MCF 10A (cell line): ENCODE measurements at regions of chr6 and their contacts with region 1.

Region 1: DNA sequence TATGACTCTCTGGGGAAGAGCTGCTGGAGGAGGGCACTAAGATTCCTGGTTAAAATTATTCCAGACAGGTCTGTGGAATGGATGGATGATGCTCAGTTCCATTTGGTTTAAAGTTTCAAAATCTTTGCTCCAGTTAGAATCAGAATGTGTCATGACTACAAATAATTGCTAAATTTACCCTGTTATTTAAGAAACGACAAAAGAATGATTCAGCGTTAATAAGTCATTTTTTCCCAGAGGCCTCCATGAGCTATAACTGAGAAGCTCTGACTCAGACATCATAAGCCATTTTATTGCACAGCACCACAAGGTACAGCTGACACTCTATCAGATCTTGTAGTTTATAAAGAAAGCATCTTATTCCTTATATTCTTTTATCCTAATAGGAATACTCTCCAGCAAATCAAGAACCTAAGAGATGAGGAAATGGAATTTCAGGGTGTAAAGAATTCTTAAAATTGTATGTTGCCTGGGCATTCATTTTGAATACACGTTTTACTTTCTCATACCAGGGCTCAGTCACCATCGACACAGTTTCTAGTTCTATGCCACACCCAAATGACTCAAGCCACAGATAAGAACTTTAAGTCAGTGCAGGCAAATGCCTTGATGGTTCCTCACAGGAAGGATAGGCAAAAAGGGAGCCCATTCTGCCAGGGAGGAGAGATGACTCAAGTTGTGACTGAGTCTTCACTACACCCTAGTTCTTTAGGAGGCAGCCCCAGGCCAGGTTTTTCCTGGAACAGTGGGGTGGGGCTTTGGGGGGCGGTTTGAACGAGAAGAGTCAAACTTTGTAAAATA is 636.0 kb downstream of the MMUT start:
- DNase-seq: peak; percentile 98
- H3K4me3 Mint-ChIP-seq: peak overlapping the region; percentile 69
- H3K27ac Mint-ChIP-seq: peak overlapping the region; percentile 100
- H3K4me1 Mint-ChIP-seq: peaks cover 29% of the 10 kb centered on the region
- H3K27me3 Mint-ChIP-seq: no peaks in the 10 kb centered on the region
- CTCF ChIP-seq: no peak

Region 2: GRCh38 chr6:48111143-48111506 is 716.0 kb before region 1 on chr6 and contains the start of gene PTCHD4:
- CTCF ChIA-PET with region 1: no interaction called
- POLR2A ChIA-PET with region 1: interaction called, 4 read pairs
- intact Hi-C with region 1: loop called (anchors 10 kb)
- DNase-seq: peak; percentile 98
- H3K4me3 Mint-ChIP-seq: peak within 1 kb of the TSS; percentile 97
- H3K27ac Mint-ChIP-seq: peak within 1 kb of the TSS; percentile 98
- H3K4me1 Mint-ChIP-seq: peaks cover 15% of the 10 kb centered on the region
- H3K27me3 Mint-ChIP-seq: no peaks in the 10 kb centered on the region
- CTCF ChIP-seq: no peak
- total RNA-seq, gene PTCHD4: 7.4 and 8.4 TPM in 2 replicates

Region 3: DNA sequence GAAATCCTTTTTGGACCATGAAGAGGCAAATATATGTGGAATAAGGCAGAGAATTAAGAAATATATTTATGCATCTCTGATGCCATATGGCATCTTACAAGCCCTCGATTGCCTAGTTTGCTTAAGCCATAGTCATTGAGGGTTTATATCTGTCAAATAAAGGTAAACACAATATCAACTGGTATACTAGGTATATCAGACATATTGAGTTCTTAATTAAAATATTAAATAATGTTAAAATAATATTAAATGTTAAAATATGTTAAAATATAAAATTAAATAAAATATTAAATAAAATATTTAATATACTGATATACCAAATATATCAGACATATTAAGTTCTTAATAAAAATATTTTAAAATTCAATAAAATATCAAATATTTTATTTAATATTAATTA is 148.7 kb before region 1 on chr6:
- CTCF ChIA-PET with region 1: no interaction called
- POLR2A ChIA-PET with region 1: no interaction called
- intact Hi-C with region 1: no loop called
- DNase-seq: no peak
- H3K4me3 Mint-ChIP-seq: no peak overlapping the region
- H3K27ac Mint-ChIP-seq: no peak overlapping the region
- H3K4me1 Mint-ChIP-seq: no peaks in the 10 kb centered on the region
- H3K27me3 Mint-ChIP-seq: no peaks in the 10 kb centered on the region
- CTCF ChIP-seq: no peak

Region 4: DNA sequence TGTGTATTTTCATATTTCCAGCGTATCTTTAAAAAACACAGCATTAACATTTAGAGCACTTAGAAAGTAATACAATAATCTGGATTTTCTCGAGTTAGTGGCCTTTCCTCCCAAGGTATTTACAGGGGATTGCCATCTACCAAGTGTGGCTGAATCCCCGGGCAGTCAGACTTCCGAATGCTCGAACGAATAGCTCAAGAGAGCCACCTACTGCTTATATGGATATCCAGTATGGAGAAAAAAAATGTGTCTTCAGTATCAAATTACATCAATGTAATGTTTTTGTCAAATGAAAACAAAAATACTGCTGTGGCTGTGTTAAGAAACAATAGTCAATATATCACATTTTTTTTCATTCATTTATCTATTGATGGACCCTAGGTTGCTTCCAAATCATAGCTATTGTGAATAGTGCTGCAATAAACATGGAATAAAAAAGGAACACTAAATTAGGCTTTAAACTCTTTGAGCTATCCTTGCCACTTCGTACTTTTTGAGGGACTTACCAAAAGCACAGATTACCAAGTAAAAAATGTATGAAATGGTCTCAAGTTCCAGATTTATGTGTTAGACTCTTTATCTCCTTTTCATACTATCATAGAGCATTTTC is 61.6 kb before region 1 on chr6:
- CTCF ChIA-PET with region 1: interaction called, 6 read pairs
- POLR2A ChIA-PET with region 1: interaction called, 4 read pairs
- intact Hi-C with region 1: loop called (anchors 1 kb)
- DNase-seq: peak; percentile 74
- H3K4me3 Mint-ChIP-seq: no peak overlapping the region
- H3K27ac Mint-ChIP-seq: peak overlapping the region; percentile 39
- H3K4me1 Mint-ChIP-seq: peaks cover 19% of the 10 kb centered on the region
- H3K27me3 Mint-ChIP-seq: no peaks in the 10 kb centered on the region
- CTCF ChIP-seq: peak; percentile 51

Region 5: DNA sequence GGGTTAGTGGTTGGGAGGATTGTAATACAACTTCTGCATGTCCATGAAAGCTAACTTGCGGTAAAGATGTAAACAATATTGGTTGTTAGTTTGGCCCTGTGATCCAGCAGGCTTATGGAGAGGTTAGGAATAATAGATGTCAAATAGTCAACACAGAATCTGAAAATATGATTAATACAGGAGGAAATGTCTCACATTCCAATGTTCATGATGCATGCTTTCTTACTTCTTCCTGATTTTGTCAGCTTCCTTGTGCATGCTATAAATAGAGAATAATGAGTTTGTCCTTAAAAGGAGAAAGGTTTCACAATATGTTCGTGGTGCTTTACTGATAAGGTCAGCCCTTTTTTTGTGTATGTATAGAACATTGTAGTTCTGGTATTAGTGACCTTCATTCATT is 499.2 kb after region 1 on chr6:
- CTCF ChIA-PET with region 1: no interaction called
- POLR2A ChIA-PET with region 1: no interaction called
- intact Hi-C with region 1: loop called (anchors 2 kb)
- DNase-seq: peak; percentile 62
- H3K4me3 Mint-ChIP-seq: no peak overlapping the region
- H3K27ac Mint-ChIP-seq: peak overlapping the region; percentile 74
- H3K4me1 Mint-ChIP-seq: peaks cover 13% of the 10 kb centered on the region
- H3K27me3 Mint-ChIP-seq: no peaks in the 10 kb centered on the region
- CTCF ChIP-seq: no peak

Region 6: DNA sequence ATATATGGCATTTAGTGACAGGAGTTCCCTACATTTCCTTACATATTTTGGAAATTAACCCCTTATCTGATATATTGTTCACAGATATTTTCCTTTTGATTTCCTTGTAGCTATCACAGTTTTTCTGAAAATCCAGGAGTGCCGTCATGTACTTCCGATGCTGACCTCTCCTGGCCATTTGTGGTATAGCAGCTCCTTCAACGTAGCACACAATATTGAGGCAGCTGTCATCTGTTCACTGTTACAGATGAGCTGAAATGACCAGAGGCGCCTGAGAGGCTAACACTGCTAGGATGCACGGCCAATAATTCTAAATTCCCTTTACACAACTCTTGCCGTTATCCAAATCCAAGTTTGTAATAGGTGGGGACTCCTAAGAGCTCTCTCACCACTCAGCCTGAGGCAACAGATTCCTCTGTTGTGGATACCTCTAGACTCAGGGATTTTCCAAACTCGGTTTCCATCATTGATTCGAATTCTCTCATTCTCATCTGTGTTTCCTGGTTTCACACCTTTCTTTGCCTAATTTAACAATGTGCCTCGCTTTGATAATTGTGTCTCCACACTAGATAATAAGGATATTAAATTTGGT is 582.9 kb after region 1 on chr6:
- CTCF ChIA-PET with region 1: interaction called, 4 read pairs
- POLR2A ChIA-PET with region 1: interaction called, 4 read pairs
- intact Hi-C with region 1: loop called (anchors 2 kb)
- DNase-seq: peak; percentile 76
- H3K4me3 Mint-ChIP-seq: no peak overlapping the region
- H3K27ac Mint-ChIP-seq: no peak overlapping the region
- H3K4me1 Mint-ChIP-seq: no peaks in the 10 kb centered on the region
- H3K27me3 Mint-ChIP-seq: no peaks in the 10 kb centered on the region
- CTCF ChIP-seq: peak; percentile 83

Region 7: DNA sequence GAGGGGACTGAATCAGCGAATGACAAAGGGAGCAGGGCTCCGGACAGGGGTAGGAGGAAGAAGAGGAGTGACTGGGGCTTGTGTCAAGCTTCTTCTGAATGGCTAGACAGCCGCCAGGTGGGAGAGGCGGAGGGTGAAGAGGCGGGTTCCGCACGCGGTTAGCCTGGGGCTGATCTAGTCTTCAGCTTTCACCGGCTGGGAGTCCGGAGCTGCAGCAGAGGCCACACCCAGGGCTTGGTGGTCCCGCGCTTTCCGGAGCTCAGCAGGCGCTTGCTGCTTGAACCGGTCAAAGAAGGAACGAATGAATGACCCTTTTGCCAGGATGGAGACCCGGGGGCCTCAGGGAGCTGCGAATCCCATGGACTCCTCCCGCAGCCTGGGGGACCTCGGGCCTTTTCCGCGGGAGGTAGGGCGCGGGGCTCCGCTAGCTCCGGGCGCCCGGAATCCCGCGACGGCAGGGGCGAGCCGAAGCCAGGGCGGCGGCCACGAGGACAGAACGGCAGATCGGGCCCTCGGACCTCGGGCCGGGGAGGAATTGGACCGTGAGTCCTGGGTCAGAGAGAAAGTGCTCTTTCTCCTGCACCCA is 723.5 kb after region 1 on chr6 and contains the start of gene C6orf141:
- CTCF ChIA-PET with region 1: no interaction called
- POLR2A ChIA-PET with region 1: no interaction called
- intact Hi-C with region 1: loop called (anchors 2 kb)
- DNase-seq: peak; percentile 82
- H3K4me3 Mint-ChIP-seq: peak within 1 kb of the TSS; percentile 90
- H3K27ac Mint-ChIP-seq: peak within 1 kb of the TSS; percentile 77
- H3K4me1 Mint-ChIP-seq: peaks cover 25% of the 10 kb centered on the region
- H3K27me3 Mint-ChIP-seq: no peaks in the 10 kb centered on the region
- CTCF ChIP-seq: no peak
- total RNA-seq, gene C6orf141: 29.9 and 37.0 TPM in 2 replicates